Naive thymus-derived CD8-positive, alpha-beta T cell (primary cell): ENCODE measurements at regions of chr19 and their contacts with region 1.

Region 1: GRCh38 chr19:19192078-19192882 is at the starts of genes BORCS8 and RFXANK:
- DNase-seq: peak; percentile 92 to 99 (median 98)
- ATAC-seq: peak; percentile 91
- H3K4me3 Mint-ChIP-seq: peak within 1 kb of the TSS; percentile 95 to 99 (median 98)
- H3K27ac Mint-ChIP-seq: peak within 1 kb of the TSS; percentile 98 to 100 (median 99)
- H3K4me1 Mint-ChIP-seq: peaks cover 11 to 62% (median 57%) of the 10 kb centered on the region in 4 donors
- H3K27me3 Mint-ChIP-seq: no peaks in the 10 kb centered on the region
- polyA plus RNA-seq, gene BORCS8: 18.2 to 23.6 (median 18.2) TPM
- polyA plus RNA-seq, gene RFXANK: 79.3 to 101 (median 86.9) TPM

Region 2: DNA sequence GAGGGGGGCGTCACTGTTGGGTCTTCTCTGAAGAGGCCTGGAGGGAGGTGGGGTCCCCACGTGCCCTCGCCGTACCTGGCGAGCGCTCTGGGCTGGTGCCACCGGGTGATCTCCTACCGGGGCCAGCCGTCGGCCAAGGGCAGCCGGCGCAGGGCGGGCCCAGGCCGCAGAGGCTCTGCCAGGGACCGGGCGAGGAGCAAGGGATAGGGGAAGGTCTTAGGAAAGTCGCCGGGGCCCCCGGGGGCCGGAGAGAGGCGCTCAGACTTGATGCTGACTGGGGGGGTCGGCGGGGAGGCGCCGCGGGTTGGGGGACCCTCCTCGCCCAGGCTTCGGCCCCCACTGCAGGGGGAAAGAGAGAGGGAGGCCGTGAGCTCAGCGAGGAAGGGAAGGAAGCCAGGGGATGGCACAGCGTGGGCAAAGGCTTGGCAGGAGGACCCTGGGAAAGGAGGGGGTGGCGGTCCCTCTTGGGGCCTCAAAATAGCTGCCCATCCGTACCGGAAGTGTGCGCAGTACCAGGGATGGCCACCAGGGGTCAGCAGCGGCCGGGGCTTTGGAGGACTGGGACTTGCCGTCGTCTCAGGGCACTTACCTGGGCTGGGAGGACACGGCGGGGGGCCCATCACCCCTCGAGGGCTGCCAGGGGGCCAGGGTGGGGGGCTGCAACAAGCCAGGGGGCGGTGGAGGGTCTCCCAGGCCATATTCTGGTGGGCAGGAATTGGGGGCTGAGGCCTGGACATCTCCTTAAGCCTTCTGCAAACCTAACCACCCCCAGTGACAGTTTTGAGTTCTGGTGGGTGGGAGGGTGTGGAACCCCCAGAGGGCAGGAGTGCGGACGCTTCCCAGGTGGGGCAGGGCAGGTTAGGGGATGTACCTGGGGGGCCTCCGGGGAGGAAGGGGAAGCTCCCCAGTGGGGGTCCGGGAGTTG is 46.3 kb before region 1 on chr19:
- POLR2A ChIA-PET with region 1: interaction called, 11 read pairs
- DNase-seq: peak; percentile 66 to 89 (median 82)
- ATAC-seq: peak; percentile 90 to 96
- H3K4me3 Mint-ChIP-seq: no peak overlapping the region
- H3K27ac Mint-ChIP-seq: peak overlapping the region in 1 of 10 donors; percentile 70
- H3K4me1 Mint-ChIP-seq: peaks cover 0 to 5% (median 3%) of the 10 kb centered on the region in 4 donors
- H3K27me3 Mint-ChIP-seq: no peaks in the 10 kb centered on the region

Region 3: DNA sequence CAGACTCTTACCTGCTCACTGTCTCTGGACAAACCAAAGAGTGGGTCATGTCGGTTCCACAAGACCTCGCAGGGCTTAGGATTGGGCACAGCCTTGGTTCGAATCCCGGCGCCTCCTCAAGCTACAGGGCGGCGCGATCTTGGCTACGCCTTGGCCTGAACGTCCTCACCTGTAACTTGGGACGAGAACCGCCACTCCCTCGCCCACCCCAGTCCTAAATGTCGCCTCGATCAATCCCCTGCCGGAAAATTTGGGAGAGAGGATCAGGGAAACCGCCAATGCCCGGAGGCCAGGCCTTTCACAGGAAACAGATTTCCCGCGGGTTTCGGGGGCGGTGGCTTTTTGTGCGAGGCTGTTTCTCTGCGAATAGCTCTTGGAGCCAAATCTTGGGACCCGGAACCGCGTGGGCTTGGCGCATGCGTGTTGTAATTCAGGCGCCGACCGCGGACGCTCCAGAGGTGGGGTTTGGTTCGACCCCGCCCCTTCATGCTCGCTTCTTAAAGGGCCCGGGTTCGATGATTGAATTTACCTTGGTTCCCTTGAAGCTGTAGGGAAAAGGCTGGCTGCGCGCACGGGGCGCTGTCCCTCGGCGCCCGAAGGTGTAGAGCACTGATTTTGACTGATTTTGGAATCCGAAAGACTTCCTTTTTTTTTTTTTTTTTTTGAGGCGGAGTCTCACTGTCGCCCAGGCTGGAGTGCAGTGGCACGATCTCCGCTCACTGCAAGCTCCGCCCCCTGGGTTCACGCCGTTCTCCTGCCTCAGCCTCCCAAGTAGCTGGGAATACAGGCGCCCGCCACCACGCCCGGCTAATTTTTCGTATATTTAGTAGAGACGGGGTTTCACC is 11.0 kb after region 1 on chr19 and contains the start of gene NR2C2AP:
- POLR2A ChIA-PET with region 1: interaction called, 52 read pairs
- DNase-seq: peak; percentile 85 to 94 (median 88)
- ATAC-seq: peak; percentile 95
- H3K4me3 Mint-ChIP-seq: peak within 1 kb of the TSS; percentile 89 to 97 (median 92)
- H3K27ac Mint-ChIP-seq: peak within 1 kb of the TSS; percentile 88 to 96 (median 94)
- H3K4me1 Mint-ChIP-seq: peaks cover 17 to 42% (median 34%) of the 10 kb centered on the region in 4 donors
- H3K27me3 Mint-ChIP-seq: peaks cover 0 to 16% (median 4%) of the 10 kb centered on the region in 5 donors
- polyA plus RNA-seq, gene NR2C2AP: 23.7 to 37.8 (median 31.9) TPM

Region 4: GRCh38 chr19:19238126-19238852 is 46.0 kb after region 1 on chr19:
- POLR2A ChIA-PET with region 1: no interaction called
- DNase-seq: no peak
- ATAC-seq: no peak
- H3K4me3 Mint-ChIP-seq: no peak overlapping the region
- H3K27ac Mint-ChIP-seq: no peak overlapping the region
- H3K4me1 Mint-ChIP-seq: no peaks in the 10 kb centered on the region
- H3K27me3 Mint-ChIP-seq: peaks cover 9 to 34% (median 22%) of the 10 kb centered on the region in 5 donors